Right ventricle myocardium inferior (tissue), 1 donor: ENCODE measurements at regions of chr1 and their contacts with region 1.

Region 1: DNA sequence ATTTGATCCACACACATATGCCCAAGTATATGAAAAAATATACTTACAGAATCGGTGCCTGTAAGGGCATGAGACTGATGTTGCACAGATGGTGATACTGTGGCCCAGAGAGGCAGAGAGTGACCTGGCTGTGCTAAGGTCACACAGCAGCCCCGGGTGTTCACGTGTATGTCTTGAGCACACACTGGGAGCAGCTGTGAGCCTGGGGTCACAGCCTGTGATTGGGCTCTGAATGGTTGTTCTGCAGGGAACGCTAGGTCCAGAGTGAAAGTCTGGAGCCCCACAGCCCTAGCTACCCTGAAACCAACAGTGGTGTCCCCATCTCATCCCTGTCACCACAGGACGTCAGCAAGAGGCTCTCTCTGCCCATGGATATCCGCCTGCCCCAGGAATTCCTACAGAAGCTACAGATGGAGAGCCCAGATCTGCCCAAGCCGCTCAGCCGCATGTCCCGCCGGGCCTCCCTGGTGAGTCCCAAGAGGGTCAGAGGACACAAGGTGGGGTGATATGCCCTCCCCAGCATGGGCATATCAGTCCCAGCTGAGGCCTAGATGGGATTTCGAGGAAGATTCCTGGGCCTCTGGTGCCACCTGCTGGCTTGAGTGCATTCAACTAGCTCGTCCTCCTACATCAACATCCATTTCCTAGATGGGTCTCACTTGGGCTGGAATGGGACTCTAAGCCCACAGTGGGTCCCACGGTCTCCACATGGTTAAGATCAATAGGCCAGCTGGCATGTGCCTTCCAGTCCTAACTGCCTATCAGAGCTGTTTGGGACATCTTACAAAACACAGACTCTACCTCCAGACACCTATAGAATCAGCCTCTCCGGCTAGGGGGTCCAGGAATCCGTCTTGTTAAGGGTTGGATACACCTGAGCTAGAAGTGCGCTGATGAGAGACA is 19.7 kb downstream of the CDK18 start:
- DNase-seq: peak; percentile 76
- ATAC-seq: peak; percentile 47

Region 2: GRCh38 chr1:205354259-205354904 is 169.8 kb before region 1 on chr1:
- intact Hi-C with region 1: loop called (anchors 5 kb)
- DNase-seq: no peak
- ATAC-seq: no peak

Region 3: DNA sequence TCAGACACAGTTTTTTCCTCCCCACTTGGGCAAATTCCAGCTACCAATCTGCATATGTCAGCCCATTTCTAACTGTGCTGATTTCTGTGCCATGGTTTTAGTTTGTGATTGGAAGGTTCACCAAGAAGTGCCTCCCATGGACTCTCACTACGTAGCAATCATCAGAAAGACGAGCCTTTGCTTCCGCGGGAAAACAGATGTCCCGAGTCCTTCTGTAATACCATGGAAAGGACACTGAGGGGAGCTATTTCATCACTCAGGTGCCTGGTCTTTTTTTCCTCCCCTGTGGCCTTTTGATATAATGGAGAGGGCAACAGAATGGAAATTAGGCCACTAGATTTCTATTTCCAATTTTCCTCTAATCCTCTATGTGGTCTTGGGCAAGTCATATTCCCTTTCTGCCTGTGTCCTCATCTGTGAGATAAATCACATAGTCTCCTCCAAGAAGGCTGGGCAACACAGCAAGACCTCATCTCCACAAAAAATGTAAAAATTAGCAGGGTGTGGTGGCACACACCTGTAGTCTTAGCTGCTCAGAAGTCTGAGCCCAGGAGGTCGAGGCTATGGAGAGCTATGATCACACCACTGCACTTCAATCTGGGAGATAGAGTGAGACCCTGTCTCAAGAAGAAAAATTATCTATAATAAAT is 127.0 kb before region 1 on chr1:
- intact Hi-C with region 1: loop called (anchors 2 kb)
- DNase-seq: no peak
- ATAC-seq: peak; percentile 79

Region 4: GRCh38 chr1:205504311-205504984 is 19.7 kb before region 1 on chr1 and contains the start of gene CDK18:
- intact Hi-C with region 1: loop called (anchors 2 kb)
- DNase-seq: peak; percentile 91
- ATAC-seq: peak; percentile 83
- total RNA-seq, gene CDK18: 180 TPM

Region 5: DNA sequence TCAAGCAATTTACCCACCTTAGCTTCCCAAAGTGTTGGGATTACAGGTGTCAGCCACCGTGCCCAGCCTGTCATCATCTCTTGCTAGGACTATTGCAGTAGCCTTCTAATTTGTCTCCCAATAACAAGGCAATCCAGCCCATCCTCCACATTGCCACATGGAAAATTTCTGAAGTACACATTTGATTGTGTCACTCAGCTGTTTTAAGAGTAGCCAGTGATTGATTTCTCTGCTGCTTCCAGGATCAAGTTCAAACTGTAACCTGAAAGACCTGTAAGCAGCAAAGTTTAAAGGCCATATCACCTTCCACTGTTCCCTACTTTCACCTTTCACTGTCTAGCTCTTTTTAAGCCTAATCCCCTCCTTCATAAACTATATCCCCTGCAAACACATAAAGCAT is 115.4 kb after region 1 on chr1:
- intact Hi-C with region 1: no loop called
- DNase-seq: no peak
- ATAC-seq: no peak

Region 6: DNA sequence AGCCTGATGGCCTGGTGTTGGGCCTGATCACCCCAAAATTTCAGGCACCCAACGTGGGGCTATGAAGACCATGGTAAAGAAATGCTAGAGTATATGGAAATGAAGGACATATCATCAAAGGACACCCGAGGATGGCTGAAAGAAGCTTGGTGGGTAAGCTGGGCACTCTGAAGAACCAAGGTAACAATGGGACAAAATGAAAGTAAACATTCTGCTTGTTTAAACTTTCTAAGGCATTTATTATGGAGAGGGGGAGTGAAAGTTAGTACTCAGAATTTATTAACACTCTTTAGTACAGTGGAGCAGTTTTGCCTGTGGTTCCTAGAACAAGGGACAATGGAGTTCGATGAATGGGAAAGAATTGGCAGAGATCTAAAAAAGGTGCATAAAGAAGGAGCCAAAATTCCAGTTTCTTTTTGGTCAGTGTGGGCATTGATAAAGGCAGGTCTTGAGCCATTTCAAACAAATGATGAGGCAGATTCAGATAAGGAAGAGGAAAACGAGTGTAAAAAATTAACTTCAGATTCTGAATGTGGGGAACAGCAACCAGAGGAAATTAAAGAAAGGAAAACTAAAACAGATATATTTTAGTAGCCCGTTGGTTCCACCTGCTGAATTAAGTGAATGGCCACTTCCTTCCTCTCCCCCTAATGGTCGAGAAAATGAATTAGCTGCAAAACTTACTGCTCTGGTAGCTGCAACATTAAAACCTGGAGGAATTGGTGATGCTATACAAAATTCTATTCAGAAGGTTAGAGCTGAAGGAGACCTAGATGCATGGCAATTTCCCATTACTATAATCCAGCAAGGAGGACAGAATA is 334.2 kb after region 1 on chr1:
- intact Hi-C with region 1: no loop called
- DNase-seq: no peak
- ATAC-seq: no peak